IMR-90 (cell line): ENCODE measurements at regions of chr2 and their contacts with region 1.

Region 1: GRCh38 chr2:100262555-100263320 is 59.6 kb downstream of the LONRF2 start:
- DNase-seq: peak; percentile 56
- ATAC-seq: peak; percentile 82
- H3K4me3 ChIP-seq: no peak overlapping the region
- H3K27ac ChIP-seq: no peak overlapping the region
- H3K4me1 ChIP-seq: peaks cover 4% of the 10 kb centered on the region; the same call in 1 of the 2 replicates
- H3K27me3 ChIP-seq: peaks cover 11% of the 10 kb centered on the region
- CTCF ChIP-seq: peak; percentile 95
- POLR2A ChIP-seq: 0 out of 2 replicates have a peak, but pooled peaks have one; percentile 26
- RAD21 ChIP-seq: peak; percentile 99

Region 2: GRCh38 chr2:98835831-98836385 is 1426.8 kb before region 1 on chr2:
- CTCF ChIA-PET with region 1: no interaction called
- POLR2A ChIA-PET with region 1: no interaction called
- dilution Hi-C with region 1: no loop called
- in situ Hi-C with region 1: no loop called
- intact Hi-C with region 1: loop called (anchors 5 kb)
- DNase-seq: no peak
- ATAC-seq: no peak
- H3K4me3 ChIP-seq: no peak overlapping the region
- H3K27ac ChIP-seq: no peak overlapping the region
- H3K4me1 ChIP-seq: no peaks in the 10 kb centered on the region
- H3K27me3 ChIP-seq: peaks cover 16% of the 10 kb centered on the region
- CTCF ChIP-seq: no peak
- POLR2A ChIP-seq: no peak
- RAD21 ChIP-seq: no peak

Region 3: GRCh38 chr2:99154643-99155536 is 1107.8 kb before region 1 on chr2 and contains the starts of genes LIPT1 and TSGA10:
- CTCF ChIA-PET with region 1: no interaction called
- POLR2A ChIA-PET with region 1: no interaction called
- dilution Hi-C with region 1: no loop called
- in situ Hi-C with region 1: loop called (anchors 25 kb)
- intact Hi-C with region 1: no loop called
- DNase-seq: peak; percentile 92
- ATAC-seq: peak; percentile 100
- H3K4me3 ChIP-seq: peak within 1 kb of the TSS; percentile 79
- H3K27ac ChIP-seq: peak within 1 kb of the TSS; percentile 72
- H3K4me1 ChIP-seq: peaks cover 5% of the 10 kb centered on the region
- H3K27me3 ChIP-seq: no peaks in the 10 kb centered on the region
- CTCF ChIP-seq: peak; percentile 7; the same call in 1 of the 2 replicates
- POLR2A ChIP-seq: peak; percentile 54
- RAD21 ChIP-seq: no peak
- total RNA-seq, gene LIPT1: 3.2 and 4.2 TPM in 2 replicates
- total RNA-seq, gene TSGA10: 0.54 and 1.1 TPM in 2 replicates

Region 4: GRCh38 chr2:99489761-99490622 is 772.7 kb before region 1 on chr2 and contains the start of gene REV1:
- CTCF ChIA-PET with region 1: no interaction called
- POLR2A ChIA-PET with region 1: no interaction called
- dilution Hi-C with region 1: no loop called
- in situ Hi-C with region 1: no loop called
- intact Hi-C with region 1: loop called (anchors 2 kb)
- DNase-seq: peak; percentile 93
- ATAC-seq: peak; percentile 94
- H3K4me3 ChIP-seq: peak within 1 kb of the TSS; percentile 99
- H3K27ac ChIP-seq: peak within 1 kb of the TSS; percentile 96
- H3K4me1 ChIP-seq: 0 out of 2 replicates have a peak, but pooled peaks cover 4% of the 10 kb centered on the region
- H3K27me3 ChIP-seq: peaks cover 11% of the 10 kb centered on the region
- CTCF ChIP-seq: peak; percentile 76
- POLR2A ChIP-seq: no peak
- RAD21 ChIP-seq: peak; percentile 82
- total RNA-seq, gene REV1: 25.8 and 30.1 TPM in 2 replicates

Region 5: GRCh38 chr2:99725820-99726219 is 536.9 kb before region 1 on chr2:
- CTCF ChIA-PET with region 1: interaction called, 4 read pairs
- POLR2A ChIA-PET with region 1: no interaction called
- dilution Hi-C with region 1: no loop called
- in situ Hi-C with region 1: no loop called
- intact Hi-C with region 1: loop called (anchors 1 kb)
- DNase-seq: peak; percentile 28
- ATAC-seq: no peak
- H3K4me3 ChIP-seq: no peak overlapping the region
- H3K27ac ChIP-seq: no peak overlapping the region; the same call in 1 of the 2 replicates
- H3K4me1 ChIP-seq: peaks cover 16% of the 10 kb centered on the region
- H3K27me3 ChIP-seq: no peaks in the 10 kb centered on the region
- CTCF ChIP-seq: peak; percentile 59
- POLR2A ChIP-seq: no peak
- RAD21 ChIP-seq: peak; percentile 69

Region 6: DNA sequence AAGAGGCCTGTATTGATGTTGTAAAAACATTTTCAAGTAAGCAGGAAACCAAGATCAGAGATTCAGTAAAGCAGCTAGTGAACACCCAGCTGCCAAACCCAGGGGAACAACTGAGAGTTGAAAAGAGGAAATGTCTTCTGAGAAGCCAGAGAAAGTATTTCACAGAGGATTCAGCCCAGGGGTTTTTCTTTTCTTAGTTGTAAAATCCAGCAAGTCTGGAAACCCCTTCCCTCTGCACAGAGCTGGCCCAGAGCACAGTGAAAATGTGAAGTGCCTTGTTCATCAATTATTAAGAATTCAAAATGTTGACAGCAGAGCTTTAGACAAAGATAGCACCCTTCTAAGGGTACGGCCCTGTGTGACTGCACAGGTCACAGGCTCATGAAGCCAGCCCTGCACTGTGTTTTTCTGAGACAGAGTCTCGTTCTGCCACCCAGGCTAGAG is 148.7 kb before region 1 on chr2:
- CTCF ChIA-PET with region 1: no interaction called
- POLR2A ChIA-PET with region 1: no interaction called
- dilution Hi-C with region 1: no loop called
- in situ Hi-C with region 1: no loop called
- intact Hi-C with region 1: no loop called
- DNase-seq: no peak
- ATAC-seq: no peak
- H3K4me3 ChIP-seq: no peak overlapping the region
- H3K27ac ChIP-seq: no peak overlapping the region
- H3K4me1 ChIP-seq: no peaks in the 10 kb centered on the region
- H3K27me3 ChIP-seq: peaks cover 4% of the 10 kb centered on the region; the same call in 1 of the 2 replicates
- CTCF ChIP-seq: no peak
- POLR2A ChIP-seq: no peak
- RAD21 ChIP-seq: no peak

Region 7: GRCh38 chr2:100381240-100381639 is 118.5 kb after region 1 on chr2:
- CTCF ChIA-PET with region 1: interaction called, 70 read pairs
- POLR2A ChIA-PET with region 1: no interaction called
- dilution Hi-C with region 1: no loop called
- in situ Hi-C with region 1: loop called (anchors 5 kb)
- intact Hi-C with region 1: loop called (anchors 1 kb)
- DNase-seq: peak; percentile 76
- ATAC-seq: peak; percentile 89
- H3K4me3 ChIP-seq: no peak overlapping the region
- H3K27ac ChIP-seq: no peak overlapping the region
- H3K4me1 ChIP-seq: no peaks in the 10 kb centered on the region
- H3K27me3 ChIP-seq: peaks cover 38% of the 10 kb centered on the region
- CTCF ChIP-seq: peak; percentile 93
- POLR2A ChIP-seq: no peak
- RAD21 ChIP-seq: peak; percentile 87